ENCODE measurements at regions of chr6 and their contacts with region 1.

Region 1: DNA sequence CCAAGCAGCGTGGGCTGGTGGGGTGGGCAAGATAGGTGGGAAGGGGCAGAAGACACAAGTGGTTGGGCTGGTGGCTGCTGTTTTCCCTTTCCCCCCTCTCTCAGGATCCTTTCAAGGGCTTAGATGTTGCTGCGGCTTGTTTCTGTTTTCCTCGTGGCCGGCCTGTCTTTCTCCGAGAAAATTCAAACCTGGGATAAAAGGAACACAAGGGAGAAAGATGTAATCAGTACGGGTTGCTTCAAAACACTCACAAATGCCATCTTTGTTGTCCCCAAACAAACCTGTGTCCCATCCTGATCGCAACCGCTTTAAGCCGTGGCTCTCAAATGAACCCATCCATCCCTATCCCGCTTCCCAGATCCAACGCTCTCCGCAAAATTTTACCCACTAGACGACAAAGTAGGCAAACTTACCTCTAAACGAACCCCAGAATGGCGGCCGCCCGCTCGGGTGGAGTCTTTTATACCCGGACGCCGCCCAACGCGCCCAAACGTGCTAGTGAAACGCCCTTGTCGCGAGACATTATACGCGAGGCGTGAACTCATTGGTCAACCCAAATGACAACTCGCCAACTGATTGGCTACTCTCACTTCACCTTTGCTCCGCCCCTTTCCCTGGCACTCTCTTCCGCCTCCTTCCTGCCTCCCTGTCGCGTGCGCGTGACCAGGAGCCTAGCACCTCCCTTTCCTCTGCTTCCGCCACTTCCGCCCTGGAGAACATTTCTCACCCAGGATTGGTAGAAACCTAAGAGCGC is at the start of gene PPP1R10:
- DNase-seq: peak; percentile 95 to 100 (median 99)
- H3K4me3 ChIP-seq: peak within 1 kb of the TSS; percentile 95
- H3K4me3 Mint-ChIP-seq: peak within 1 kb of the TSS; percentile 93 to 100 (median 99)
- H3K27ac ChIP-seq: peak within 1 kb of the TSS; percentile 99
- H3K27ac Mint-ChIP-seq: peak within 1 kb of the TSS; percentile 100
- H3K4me1 ChIP-seq: peaks cover 43% of the 10 kb centered on the region
- H3K4me1 Mint-ChIP-seq: peaks cover 30 to 47% (median 45%) of the 10 kb centered on the region in 3 donors
- H3K27me3 ChIP-seq: no peaks in the 10 kb centered on the region
- H3K27me3 Mint-ChIP-seq: peaks cover 0 to 20% of the 10 kb centered on the region in 2 donors
- total RNA-seq, gene PPP1R10: 115 to 117 TPM

Region 2: DNA sequence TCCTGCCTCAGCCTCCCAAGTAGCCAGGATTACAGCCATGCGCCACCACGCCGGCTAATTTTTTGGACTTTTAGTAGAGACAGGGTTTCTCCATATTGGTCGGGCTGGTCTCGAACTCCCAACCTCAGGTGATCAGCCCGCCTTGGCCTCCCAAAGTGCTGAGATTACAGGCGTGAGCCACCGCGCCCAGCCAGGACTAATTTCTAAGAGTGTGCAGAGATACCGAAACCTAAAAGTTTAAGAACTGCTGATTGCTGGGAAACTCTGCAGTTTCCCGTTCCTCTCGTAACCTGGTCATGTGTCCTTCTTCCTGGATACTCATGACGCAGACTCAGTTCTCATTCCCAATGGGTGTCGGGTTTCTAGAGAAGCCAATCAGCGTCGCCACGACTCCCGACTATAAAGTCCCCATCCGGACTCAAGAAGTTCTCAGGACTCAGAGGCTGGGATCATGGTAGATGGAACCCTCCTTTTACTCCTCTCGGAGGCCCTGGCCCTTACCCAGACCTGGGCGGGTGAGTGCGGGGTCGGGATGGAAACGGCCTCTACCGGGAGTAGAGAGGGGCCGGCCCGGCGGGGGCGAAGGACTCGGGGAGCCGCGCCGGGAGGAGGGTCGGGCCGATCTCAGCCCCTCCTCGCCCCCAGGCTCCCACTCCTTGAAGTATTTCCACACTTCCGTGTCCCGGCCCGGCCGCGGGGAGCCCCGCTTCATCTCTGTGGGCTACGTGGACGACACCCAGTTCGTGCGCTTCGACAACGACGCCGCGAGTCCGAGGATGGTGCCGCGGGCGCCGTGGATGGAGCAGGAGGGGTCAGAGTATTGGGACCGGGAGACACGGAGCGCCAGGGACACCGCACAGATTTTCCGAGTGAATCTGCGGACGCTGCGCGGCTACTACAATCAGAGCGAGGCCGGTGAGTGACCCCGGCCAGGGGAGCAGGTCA is 127.6 kb before region 1 on chr6 and contains the start of gene HLA-E:
- CTCF ChIA-PET with region 1: interaction called, 6 read pairs
- POLR2A ChIA-PET with region 1: interaction called, 20 read pairs
- DNase-seq: peak; percentile 73 to 96 (median 93)
- H3K4me3 ChIP-seq: peak within 1 kb of the TSS; percentile 99
- H3K4me3 Mint-ChIP-seq: peak within 1 kb of the TSS; percentile 93 to 100 (median 99)
- H3K27ac ChIP-seq: peak within 1 kb of the TSS; percentile 98
- H3K27ac Mint-ChIP-seq: peak within 1 kb of the TSS; percentile 93 to 100 (median 98)
- H3K4me1 ChIP-seq: peaks cover 41% of the 10 kb centered on the region
- H3K4me1 Mint-ChIP-seq: peaks cover 39 to 55% (median 44%) of the 10 kb centered on the region in 3 donors
- H3K27me3 ChIP-seq: no peaks in the 10 kb centered on the region
- H3K27me3 Mint-ChIP-seq: peaks cover 0 to 5% of the 10 kb centered on the region in 2 donors
- total RNA-seq, gene HLA-E: 502 to 511 TPM

Region 3: GRCh38 chr6:30571075-30571768 is 45.8 kb before region 1 on chr6 and contains the start of gene ABCF1:
- CTCF ChIA-PET with region 1: interaction called, 4 read pairs
- POLR2A ChIA-PET with region 1: interaction called, 27 read pairs
- DNase-seq: peak; percentile 99 to 100 (median 99)
- H3K4me3 ChIP-seq: peak within 1 kb of the TSS; percentile 92
- H3K4me3 Mint-ChIP-seq: peak within 1 kb of the TSS; percentile 92 to 100 (median 98)
- H3K27ac ChIP-seq: peak within 1 kb of the TSS; percentile 94
- H3K27ac Mint-ChIP-seq: peak within 1 kb of the TSS; percentile 96 to 100 (median 100)
- H3K4me1 ChIP-seq: peaks cover 53% of the 10 kb centered on the region
- H3K4me1 Mint-ChIP-seq: peaks cover 63 to 73% (median 69%) of the 10 kb centered on the region in 3 donors
- H3K27me3 ChIP-seq: no peaks in the 10 kb centered on the region
- H3K27me3 Mint-ChIP-seq: no peaks in the 10 kb centered on the region
- total RNA-seq, gene ABCF1: 127 to 133 TPM

Region 4: GRCh38 chr6:30641048-30641447 is 24.1 kb after region 1 on chr6:
- CTCF ChIA-PET with region 1: no interaction called
- POLR2A ChIA-PET with region 1: interaction called, 11 read pairs
- DNase-seq: peak in 1 of 5 donors; percentile 33
- H3K4me3 ChIP-seq: no peak overlapping the region
- H3K4me3 Mint-ChIP-seq: peak overlapping the region in 1 of 7 donors; percentile 16
- H3K27ac ChIP-seq: no peak overlapping the region
- H3K27ac Mint-ChIP-seq: peak overlapping the region in 4 of 8 donors; percentile 13 to 61 (median 19)
- H3K4me1 ChIP-seq: peaks cover 19% of the 10 kb centered on the region
- H3K4me1 Mint-ChIP-seq: peaks cover 14 to 19% (median 18%) of the 10 kb centered on the region in 3 donors
- H3K27me3 ChIP-seq: no peaks in the 10 kb centered on the region
- H3K27me3 Mint-ChIP-seq: no peaks in the 10 kb centered on the region

Region 5: DNA sequence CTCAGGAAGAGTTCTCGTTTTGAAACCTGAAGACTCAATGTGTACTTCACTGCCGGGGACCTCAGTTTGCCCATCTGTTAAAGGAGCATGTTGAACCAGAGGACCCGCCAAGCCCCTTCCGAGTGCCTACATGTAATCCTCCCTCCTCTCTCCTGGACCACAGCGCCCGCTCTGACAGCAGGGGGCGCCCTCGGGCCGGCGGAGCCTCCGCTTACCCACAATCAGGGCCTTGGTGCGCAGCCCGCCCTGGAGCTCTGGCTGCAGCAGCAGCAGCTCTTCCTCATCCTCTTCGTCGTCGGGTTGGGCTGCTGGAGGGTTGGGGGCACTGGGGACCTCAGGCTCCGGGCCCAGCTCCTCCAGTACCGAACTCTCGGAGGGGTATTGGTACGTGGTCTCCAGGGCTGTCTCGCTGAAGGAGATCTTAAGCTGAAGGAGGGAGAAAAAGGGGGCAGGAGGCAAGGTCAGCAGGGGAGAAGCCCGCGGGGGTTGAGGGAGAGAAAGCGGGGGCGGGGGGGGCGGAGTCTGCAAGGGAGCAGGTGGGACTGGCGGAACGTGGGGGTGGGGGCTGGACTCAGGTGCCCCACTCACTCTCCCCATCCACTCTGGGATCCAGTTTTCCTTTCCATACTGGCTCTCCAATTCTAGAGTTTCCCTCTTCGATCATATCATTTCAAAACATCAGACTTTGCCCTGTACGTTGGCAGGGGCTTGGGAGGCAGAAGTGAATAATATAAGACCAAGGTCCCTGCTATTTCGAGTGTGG is 62.2 kb after region 1 on chr6:
- CTCF ChIA-PET with region 1: interaction called, 16 read pairs
- POLR2A ChIA-PET with region 1: interaction called, 5 read pairs
- DNase-seq: peak; percentile 86 to 93 (median 90)
- H3K4me3 ChIP-seq: peak overlapping the region; percentile 92
- H3K4me3 Mint-ChIP-seq: peak overlapping the region; percentile 95 to 100 (median 99)
- H3K27ac ChIP-seq: peak overlapping the region; percentile 53
- H3K27ac Mint-ChIP-seq: peak overlapping the region; percentile 80 to 100 (median 99)
- H3K4me1 ChIP-seq: peaks cover 38% of the 10 kb centered on the region
- H3K4me1 Mint-ChIP-seq: peaks cover 42 to 51% (median 44%) of the 10 kb centered on the region in 3 donors
- H3K27me3 ChIP-seq: no peaks in the 10 kb centered on the region
- H3K27me3 Mint-ChIP-seq: no peaks in the 10 kb centered on the region

Region 6: DNA sequence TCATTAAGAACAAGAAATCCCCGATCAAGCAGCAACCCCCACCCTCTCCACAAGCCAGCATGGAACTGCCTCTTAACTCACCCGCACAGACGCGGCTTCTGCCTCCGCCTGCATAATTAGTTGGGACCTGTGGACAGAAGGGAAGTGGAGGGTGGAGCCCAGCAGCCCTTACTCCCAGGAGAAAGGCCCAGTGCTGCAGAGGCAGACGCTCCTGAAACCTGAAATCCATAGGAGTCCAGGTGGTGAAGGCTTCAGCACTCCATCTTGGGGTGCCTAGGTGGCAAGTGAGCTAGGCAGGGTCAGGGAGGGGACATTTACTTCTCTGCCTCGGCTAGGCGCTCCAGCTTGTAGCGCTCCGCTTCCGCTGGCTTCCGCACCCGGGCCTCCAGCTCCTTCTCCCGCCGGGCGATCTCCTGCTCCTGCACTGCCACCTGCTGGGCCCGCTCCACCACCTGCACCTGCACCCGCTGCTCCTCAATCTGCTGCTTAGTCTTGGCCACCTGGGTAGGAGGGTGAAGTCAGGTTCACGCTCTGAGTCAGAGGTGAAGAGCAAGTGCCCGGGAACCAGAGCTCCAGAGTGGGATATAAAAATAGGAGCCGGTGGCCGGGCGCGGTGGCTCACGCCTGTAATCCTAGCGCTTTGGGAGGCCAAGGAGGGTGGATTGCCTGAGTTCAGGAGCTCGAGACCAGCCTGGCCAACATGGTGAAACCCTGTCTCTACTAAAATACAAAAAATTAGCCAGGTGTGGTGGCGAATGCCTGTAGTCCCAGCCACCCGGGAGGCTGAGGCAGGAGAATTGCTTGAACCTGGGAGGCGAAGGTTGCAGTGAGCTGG is 113.8 kb after region 1 on chr6:
- CTCF ChIA-PET with region 1: interaction called, 9 read pairs
- POLR2A ChIA-PET with region 1: interaction called, 21 read pairs
- DNase-seq: peak; percentile 71 to 86 (median 73)
- H3K4me3 ChIP-seq: no peak overlapping the region
- H3K4me3 Mint-ChIP-seq: peak overlapping the region in 4 of 7 donors; percentile 23 to 43 (median 34)
- H3K27ac ChIP-seq: no peak overlapping the region
- H3K27ac Mint-ChIP-seq: peak overlapping the region in 7 of 8 donors; percentile 47 to 86 (median 65)
- H3K4me1 ChIP-seq: peaks cover 33% of the 10 kb centered on the region
- H3K4me1 Mint-ChIP-seq: peaks cover 23 to 49% (median 32%) of the 10 kb centered on the region in 3 donors
- H3K27me3 ChIP-seq: no peaks in the 10 kb centered on the region
- H3K27me3 Mint-ChIP-seq: no peaks in the 10 kb centered on the region